Activated CD4-positive, alpha-beta T cell treated with anti-CD3 and anti-CD28 coated beads for 36 hours (primary cell): ENCODE measurements at regions of chr15 and their contacts with region 1.

Region 1: GRCh38 chr15:40857601-40858341 is 13.9 kb downstream of the SPINT1 start:
- DNase-seq: peak; percentile 89
- ATAC-seq: peak; percentile 94
- H3K4me3 Mint-ChIP-seq: no peak overlapping the region
- H3K27ac Mint-ChIP-seq: no peak overlapping the region
- H3K4me1 Mint-ChIP-seq: peaks cover 3% of the 10 kb centered on the region
- H3K27me3 Mint-ChIP-seq: no peaks in the 10 kb centered on the region

Region 2: DNA sequence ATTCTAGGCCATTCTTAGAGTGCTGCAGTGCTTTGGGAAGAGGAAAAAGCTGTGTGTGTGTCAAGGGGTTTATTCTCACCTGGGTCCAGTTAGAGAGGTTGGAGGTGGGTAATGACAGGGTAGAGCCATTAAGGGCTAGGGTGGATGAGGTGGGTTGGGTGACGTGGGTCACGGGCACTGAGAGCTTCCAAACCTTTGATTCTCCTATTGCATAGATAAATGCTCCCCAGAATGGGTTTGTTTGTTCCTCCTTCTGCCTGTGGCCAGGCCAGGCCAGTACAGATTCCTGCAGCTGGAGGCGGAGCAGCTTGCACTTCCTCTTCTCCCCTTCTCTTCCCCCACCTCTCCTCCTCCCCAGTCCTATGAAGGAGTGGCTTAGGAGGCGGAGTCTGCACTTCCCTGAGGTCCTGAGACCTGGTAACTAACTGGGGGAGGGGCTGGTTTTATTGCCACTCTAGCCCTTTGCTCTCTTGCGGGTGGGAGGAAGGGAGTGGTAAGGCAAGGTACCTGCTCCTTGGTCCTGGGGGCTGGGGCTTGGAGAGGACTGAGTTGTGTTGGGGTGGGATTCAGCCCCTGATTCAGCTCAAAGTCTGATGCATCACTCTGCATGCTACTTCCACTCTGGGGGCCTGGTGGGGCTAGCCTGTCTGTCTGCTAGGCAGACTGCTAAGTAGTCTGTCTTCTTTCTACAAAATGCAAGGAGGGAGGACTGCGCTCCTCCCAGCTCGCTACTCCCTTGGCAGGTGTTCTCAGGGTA is 10.4 kb before region 1 on chr15:
- CTCF ChIA-PET with region 1: interaction called, 37 read pairs
- POLR2A ChIA-PET with region 1: no interaction called
- intact Hi-C with region 1: no loop called
- DNase-seq: no peak
- ATAC-seq: no peak
- H3K4me3 Mint-ChIP-seq: no peak overlapping the region
- H3K27ac Mint-ChIP-seq: no peak overlapping the region
- H3K4me1 Mint-ChIP-seq: peaks cover 26% of the 10 kb centered on the region
- H3K27me3 Mint-ChIP-seq: peaks cover 6% of the 10 kb centered on the region

Region 3: GRCh38 chr15:41022487-41023090 is 164.8 kb after region 1 on chr15:
- CTCF ChIA-PET with region 1: interaction called, 3 read pairs
- POLR2A ChIA-PET with region 1: no interaction called
- intact Hi-C with region 1: loop called in 1 of 2 experiments (anchors 2 kb)
- DNase-seq: peak; percentile 54
- ATAC-seq: peak; percentile 80
- H3K4me3 Mint-ChIP-seq: no peak overlapping the region
- H3K27ac Mint-ChIP-seq: no peak overlapping the region
- H3K4me1 Mint-ChIP-seq: peaks cover 2% of the 10 kb centered on the region
- H3K27me3 Mint-ChIP-seq: no peaks in the 10 kb centered on the region

Region 4: GRCh38 chr15:41180206-41180789 is 322.5 kb after region 1 on chr15:
- CTCF ChIA-PET with region 1: interaction called, 8 read pairs
- POLR2A ChIA-PET with region 1: no interaction called
- intact Hi-C with region 1: loop called in 1 of 2 experiments (anchors 1 kb)
- DNase-seq: no peak
- ATAC-seq: no peak
- H3K4me3 Mint-ChIP-seq: no peak overlapping the region
- H3K27ac Mint-ChIP-seq: no peak overlapping the region
- H3K4me1 Mint-ChIP-seq: no peaks in the 10 kb centered on the region
- H3K27me3 Mint-ChIP-seq: no peaks in the 10 kb centered on the region